ENCODE measurements at regions of chr7 and their contacts with region 1.

Region 1: GRCh38 chr7:73626814-73627213 is 2.5 kb upstream of the MLXIPL start:
- DNase-seq: no peak
- ATAC-seq: no peak

Region 2: DNA sequence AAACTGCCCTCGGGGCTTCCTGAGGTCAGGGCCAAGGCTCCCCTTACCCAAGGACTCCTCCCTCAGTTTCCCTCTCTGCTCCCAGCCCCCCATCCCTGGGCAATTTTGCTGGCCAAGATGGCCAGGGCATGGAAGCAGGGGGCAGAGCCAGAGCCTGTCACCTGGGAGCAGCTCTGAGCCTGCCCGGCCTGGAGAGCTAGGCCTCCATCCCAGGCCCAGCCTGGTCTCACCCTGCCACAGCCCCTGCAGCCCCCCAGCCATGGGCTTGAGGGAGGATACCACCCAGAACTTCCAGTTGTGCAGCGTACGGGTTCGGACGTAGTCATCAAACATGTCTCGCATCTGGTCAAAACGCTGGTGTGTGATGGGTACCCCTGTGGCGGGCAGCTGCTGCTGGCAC is 31.5 kb before region 1 on chr7:
- intact Hi-C with region 1: loop called (anchors 1 kb)
- DNase-seq: no peak
- ATAC-seq: no peak

Measured in sciatic nerve (tissue), 2 donors.